CD4-positive, alpha-beta memory T cell (primary cell): ENCODE measurements at regions of chr10 and their contacts with region 1.

Region 1: GRCh38 chr10:62779487-62780248 is 24.9 kb upstream of the ADO start:
- DNase-seq: peak; percentile 84 to 96 (median 90)
- H3K4me3 ChIP-seq: no peak overlapping the region
- H3K4me3 Mint-ChIP-seq: peak overlapping the region in 5 of 8 donors; percentile 33 to 75 (median 66)
- H3K27ac ChIP-seq: peak overlapping the region; percentile 32
- H3K27ac Mint-ChIP-seq: peak overlapping the region; percentile 57 to 94 (median 79)
- H3K4me1 ChIP-seq: peaks cover 20% of the 10 kb centered on the region
- H3K4me1 Mint-ChIP-seq: peaks cover 13 to 20% (median 16%) of the 10 kb centered on the region in 4 donors
- H3K27me3 ChIP-seq: no peaks in the 10 kb centered on the region
- H3K27me3 Mint-ChIP-seq: no peaks in the 10 kb centered on the region

Region 2: GRCh38 chr10:62755662-62756653 is 23.7 kb before region 1 on chr10:
- CTCF ChIA-PET with region 1: no interaction called
- POLR2A ChIA-PET with region 1: interaction called, 4 read pairs
- intact Hi-C with region 1: loop called (anchors 1 kb)
- DNase-seq: peak in 4 of 5 donors; percentile 27 to 44 (median 36)
- H3K4me3 ChIP-seq: no peak overlapping the region
- H3K4me3 Mint-ChIP-seq: peak overlapping the region; percentile 6 to 72 (median 52)
- H3K27ac ChIP-seq: no peak overlapping the region
- H3K27ac Mint-ChIP-seq: peak overlapping the region; percentile 10 to 88 (median 42)
- H3K4me1 ChIP-seq: peaks cover 22% of the 10 kb centered on the region
- H3K4me1 Mint-ChIP-seq: peaks cover 20 to 35% (median 23%) of the 10 kb centered on the region in 4 donors
- H3K27me3 ChIP-seq: no peaks in the 10 kb centered on the region
- H3K27me3 Mint-ChIP-seq: no peaks in the 10 kb centered on the region

Region 3: GRCh38 chr10:62804356-62805230 is 24.9 kb after region 1 on chr10 and contains the start of gene ADO:
- CTCF ChIA-PET with region 1: interaction called, 7 read pairs
- POLR2A ChIA-PET with region 1: interaction called, 26 read pairs
- intact Hi-C with region 1: loop called (anchors 1 kb)
- DNase-seq: peak; percentile 80 to 86 (median 83)
- H3K4me3 ChIP-seq: peak within 1 kb of the TSS; percentile 60 to 88
- H3K4me3 Mint-ChIP-seq: peak within 1 kb of the TSS; percentile 91 to 99 (median 96)
- H3K27ac ChIP-seq: peak within 1 kb of the TSS; percentile 83
- H3K27ac Mint-ChIP-seq: peak within 1 kb of the TSS; percentile 96 to 100 (median 99)
- H3K4me1 ChIP-seq: peaks cover 35% of the 10 kb centered on the region
- H3K4me1 Mint-ChIP-seq: peaks cover 22 to 45% (median 33%) of the 10 kb centered on the region in 4 donors
- H3K27me3 ChIP-seq: no peaks in the 10 kb centered on the region
- H3K27me3 Mint-ChIP-seq: no peaks in the 10 kb centered on the region
- total RNA-seq, gene ADO: 18.6 to 19.1 TPM